Activated CD4-positive, alpha-beta T cell treated with anti-CD3 and anti-CD28 coated beads, Interleukin-2, amount 10 ng/mL, durations not matched to agents 7 days and 5 days (primary cell): ENCODE measurements at regions of chr2 and their contacts with region 1.

Region 1: GRCh38 chr2:241877989-241878970 is 8.8 kb downstream of the RTP5 start:
- DNase-seq: peak; percentile 78
- H3K4me3 Mint-ChIP-seq: no peak overlapping the region
- H3K27ac Mint-ChIP-seq: no peak overlapping the region
- H3K4me1 Mint-ChIP-seq: peaks cover 34% of the 10 kb centered on the region
- H3K27me3 Mint-ChIP-seq: peaks cover 2% of the 10 kb centered on the region

Region 2: DNA sequence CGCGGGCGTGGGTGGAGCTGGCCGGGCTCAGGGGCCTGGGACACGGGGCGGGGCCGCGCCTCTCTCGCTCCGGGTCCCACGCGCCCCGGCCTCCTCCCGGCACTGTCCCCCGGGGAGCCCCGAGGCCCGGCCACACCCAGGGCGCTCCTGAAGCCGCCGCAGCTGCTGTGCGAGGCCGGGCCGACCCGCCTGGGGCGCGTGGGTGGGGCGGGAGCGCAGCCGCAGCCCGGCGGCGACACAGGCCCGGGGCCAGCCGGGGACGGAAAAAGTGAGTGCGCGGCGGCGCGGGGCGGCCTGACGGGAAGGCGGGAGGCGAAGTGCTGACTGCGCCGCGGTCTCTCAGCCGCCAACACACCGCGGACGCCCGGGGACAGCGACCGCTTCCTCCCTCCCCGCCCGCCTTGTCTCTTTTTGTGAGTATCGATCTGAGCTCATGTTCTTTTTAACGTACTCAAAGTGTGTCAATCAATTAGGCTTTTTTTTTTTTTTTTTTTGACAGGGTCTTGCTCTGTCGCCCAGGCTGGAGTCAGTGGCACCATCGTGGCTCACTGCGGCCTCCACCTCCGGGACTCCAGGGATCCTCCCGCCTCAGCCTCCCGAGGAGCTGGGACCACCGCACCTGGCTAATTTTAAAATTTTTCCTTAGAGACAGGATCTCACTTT is 34.1 kb before region 1 on chr2:
- CTCF ChIA-PET with region 1: no interaction called
- POLR2A ChIA-PET with region 1: no interaction called
- DNase-seq: peak; percentile 74
- H3K4me3 Mint-ChIP-seq: peak overlapping the region; percentile 65
- H3K27ac Mint-ChIP-seq: peak overlapping the region; percentile 86
- H3K4me1 Mint-ChIP-seq: peaks cover 33% of the 10 kb centered on the region
- H3K27me3 Mint-ChIP-seq: peaks cover 9% of the 10 kb centered on the region

Region 3: DNA sequence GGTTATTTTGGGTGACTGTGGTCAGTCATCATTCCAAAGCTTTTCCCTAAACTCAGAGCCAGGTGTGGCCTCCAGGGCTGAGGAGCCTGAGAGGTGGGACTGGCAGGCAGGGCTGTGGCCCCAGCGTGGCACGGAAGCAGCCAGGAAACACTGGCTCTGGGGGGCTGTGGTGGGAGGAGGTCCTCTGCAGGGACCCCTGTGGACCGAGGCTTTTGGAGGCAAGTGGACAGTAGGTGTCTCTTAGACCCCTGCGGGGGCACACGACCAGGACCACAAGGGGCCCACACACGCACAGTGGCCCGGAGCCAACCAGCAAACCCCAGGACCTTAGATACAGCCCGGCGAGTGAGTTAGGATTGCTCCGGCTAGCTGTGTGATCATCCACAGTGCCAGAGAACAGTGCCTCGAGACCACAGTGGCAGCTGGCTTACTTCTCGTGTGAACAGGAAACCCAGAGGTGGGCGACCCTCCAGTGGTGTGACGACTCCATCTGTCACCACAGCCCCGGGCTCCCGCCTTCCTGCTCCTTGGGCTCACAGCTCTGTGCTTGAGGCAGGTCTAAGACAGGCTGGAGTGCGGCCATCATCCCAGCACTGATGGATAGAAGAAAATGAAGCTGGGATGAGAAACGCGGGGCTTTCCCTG is 10.4 kb before region 1 on chr2:
- CTCF ChIA-PET with region 1: interaction called, 19 read pairs
- POLR2A ChIA-PET with region 1: interaction called, 3 read pairs
- DNase-seq: no peak
- H3K4me3 Mint-ChIP-seq: no peak overlapping the region
- H3K27ac Mint-ChIP-seq: no peak overlapping the region
- H3K4me1 Mint-ChIP-seq: peaks cover 58% of the 10 kb centered on the region
- H3K27me3 Mint-ChIP-seq: peaks cover 28% of the 10 kb centered on the region